Activated T-helper 1 cell treated with anti-CD3 and anti-CD28 coated beads, Interleukin-12 subunit alpha, Interleukin-12 subunit beta, Interleukin-2, Interleukin-4 antibody, amounts not matched to agents 30 ng/mL and 10 ng/mL and 1 ng/mL, durations not matched to agents 14 hours and 24 hours and 36 hours (primary cell): ENCODE measurements at regions of chr5 and their contacts with region 1.

Region 1: DNA sequence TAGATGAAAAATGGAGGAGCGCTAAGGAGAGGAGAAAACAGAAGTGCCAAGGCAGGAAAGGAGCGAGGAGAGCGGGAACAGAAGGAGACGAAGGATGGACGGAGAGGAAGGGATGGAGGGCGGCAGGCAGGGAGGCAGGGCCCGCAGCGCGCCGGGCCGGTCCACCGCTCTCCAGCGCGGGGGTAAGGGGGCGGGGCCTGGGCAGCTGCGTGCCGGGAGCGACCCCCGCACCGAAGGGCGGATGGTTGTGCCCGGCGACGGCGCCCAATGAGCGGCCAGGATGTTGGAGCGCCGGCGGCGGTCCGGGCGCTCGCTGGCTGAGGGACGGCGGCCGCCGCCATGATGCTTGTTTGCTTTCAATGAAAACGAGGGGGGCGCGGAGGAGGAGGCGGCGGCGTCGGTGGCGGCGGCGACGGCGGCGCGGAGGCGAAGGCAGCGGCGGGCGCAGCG is at the start of gene CNOT6:
- DNase-seq: peak; percentile 94
- H3K4me3 Mint-ChIP-seq: peak within 1 kb of the TSS; percentile 90
- H3K27ac Mint-ChIP-seq: peak within 1 kb of the TSS; percentile 93
- H3K4me1 Mint-ChIP-seq: peaks cover 37% of the 10 kb centered on the region
- H3K27me3 Mint-ChIP-seq: no peaks in the 10 kb centered on the region
- total RNA-seq, gene CNOT6: 48.8 and 49.7 TPM in 2 replicates

Region 2: GRCh38 chr5:179697993-179698934 is 795.8 kb before region 1 on chr5:
- intact Hi-C with region 1: loop called (anchors 10 kb)
- DNase-seq: peak; percentile 99
- H3K4me3 Mint-ChIP-seq: peak overlapping the region; percentile 100
- H3K27ac Mint-ChIP-seq: peak overlapping the region; percentile 100
- H3K4me1 Mint-ChIP-seq: peaks cover 27% of the 10 kb centered on the region
- H3K27me3 Mint-ChIP-seq: no peaks in the 10 kb centered on the region

Region 3: DNA sequence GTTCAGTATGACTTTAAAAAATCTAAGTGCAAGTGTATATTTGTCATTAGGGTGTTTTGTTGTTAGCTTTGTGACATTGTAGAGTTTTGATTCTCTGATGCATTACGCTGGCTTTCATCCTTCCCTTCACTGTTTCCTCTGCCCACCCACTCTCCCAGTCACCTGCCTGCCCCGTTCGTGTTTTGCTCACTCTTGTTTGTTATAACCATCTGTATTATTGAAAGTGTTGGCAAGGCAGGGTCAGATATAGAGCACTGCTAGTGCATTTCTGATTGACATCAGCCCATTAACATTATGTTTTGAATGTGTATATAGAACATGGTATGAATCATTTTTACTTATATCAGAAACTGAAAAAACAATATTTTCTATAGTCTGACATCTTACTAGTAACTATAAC is 69.9 kb after region 1 on chr5:
- intact Hi-C with region 1: loop called (anchors 10 kb)
- DNase-seq: no peak
- H3K4me3 Mint-ChIP-seq: no peak overlapping the region
- H3K27ac Mint-ChIP-seq: no peak overlapping the region
- H3K4me1 Mint-ChIP-seq: peaks cover 22% of the 10 kb centered on the region
- H3K27me3 Mint-ChIP-seq: no peaks in the 10 kb centered on the region

Region 4: DNA sequence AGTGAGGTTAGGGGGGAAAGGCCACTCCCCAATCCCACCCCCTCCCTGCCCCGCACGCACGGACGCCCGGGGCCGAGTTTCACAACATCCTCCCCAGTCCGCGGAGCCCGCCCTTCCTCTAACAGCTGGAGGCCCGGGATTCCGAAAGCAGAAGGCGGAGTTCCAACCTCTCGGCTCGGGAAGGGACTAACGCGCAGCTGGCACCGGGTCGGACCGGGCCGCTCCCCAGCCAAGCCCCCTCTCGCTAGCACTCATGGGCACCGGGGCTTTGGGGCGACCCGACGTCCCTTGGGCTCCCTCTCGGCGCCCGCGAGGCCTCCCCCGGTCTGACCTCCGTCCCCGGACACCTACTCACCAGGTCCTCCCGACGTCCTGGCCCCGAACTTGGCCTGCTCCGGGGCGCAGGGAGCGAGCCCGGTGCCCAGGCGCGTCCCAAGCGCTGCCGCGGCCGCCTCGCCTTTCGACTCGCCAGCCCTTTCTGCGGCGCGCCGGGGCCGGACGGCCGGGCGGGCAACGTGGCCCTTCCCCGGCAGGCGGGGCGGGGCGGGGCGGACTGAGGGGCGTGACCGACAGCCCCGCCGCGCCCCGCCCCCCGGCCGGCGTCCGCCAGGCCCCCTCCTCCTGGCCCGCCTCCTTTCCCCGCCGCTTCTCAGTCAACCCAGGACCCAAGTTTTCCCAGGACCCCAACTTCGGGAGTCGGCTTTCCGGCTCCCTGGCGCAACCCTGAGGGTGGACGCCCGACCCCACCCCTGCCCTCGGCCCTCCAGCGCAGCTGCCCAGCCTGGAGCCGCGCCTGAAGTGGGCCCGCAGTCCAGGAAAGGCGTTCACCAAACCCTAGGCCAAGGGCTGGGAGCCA is 308.5 kb after region 1 on chr5 and contains the start of gene MGAT1:
- intact Hi-C with region 1: loop called (anchors 2 kb)
- DNase-seq: peak; percentile 72
- H3K4me3 Mint-ChIP-seq: peak within 1 kb of the TSS; percentile 94
- H3K27ac Mint-ChIP-seq: peak within 1 kb of the TSS; percentile 96
- H3K4me1 Mint-ChIP-seq: peaks cover 82% of the 10 kb centered on the region
- H3K27me3 Mint-ChIP-seq: no peaks in the 10 kb centered on the region
- total RNA-seq, gene MGAT1: 106 and 107 TPM in 2 replicates

Region 5: DNA sequence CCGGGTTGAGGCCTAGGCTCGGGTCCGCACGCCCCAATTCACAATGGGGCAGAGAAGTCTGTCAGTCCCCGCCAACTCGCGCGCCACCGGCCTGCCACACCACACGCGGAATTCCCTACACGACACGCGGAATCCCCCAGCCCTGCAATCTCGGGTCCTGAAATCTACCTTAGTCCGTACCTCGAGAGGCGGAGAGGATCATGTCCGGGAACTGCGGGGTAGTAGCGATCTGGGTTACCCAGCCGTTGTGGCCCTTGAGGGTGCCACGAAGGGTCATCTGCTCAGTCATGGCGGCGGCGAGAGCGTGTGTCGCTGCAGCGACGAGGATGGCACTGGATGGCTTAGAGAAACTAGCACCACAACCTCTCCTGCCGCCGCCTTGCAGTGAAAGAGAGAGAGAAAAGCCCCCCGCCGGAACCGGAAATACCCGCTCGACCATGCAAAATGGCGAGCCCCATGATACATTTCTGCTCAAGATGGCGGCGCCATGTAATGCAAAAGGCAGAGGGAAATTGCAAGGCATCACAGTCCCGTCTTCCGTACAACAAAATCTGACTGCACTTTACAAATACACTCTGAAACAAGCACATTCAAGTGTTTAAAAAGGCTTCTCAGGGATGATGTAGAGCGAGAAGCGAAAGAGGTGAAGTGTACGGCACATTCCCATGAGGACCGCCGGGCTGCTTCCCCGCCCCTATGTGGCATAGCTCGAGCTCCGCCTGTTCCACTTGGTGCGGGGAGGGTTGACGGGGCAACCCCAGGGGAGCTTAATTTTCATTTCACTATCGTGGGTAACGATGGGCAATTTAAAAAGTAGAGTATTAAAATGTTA is 749.6 kb after region 1 on chr5 and contains the start of gene RACK1:
- intact Hi-C with region 1: loop called (anchors 10 kb)
- DNase-seq: peak; percentile 82
- H3K4me3 Mint-ChIP-seq: peak within 1 kb of the TSS; percentile 96
- H3K27ac Mint-ChIP-seq: peak within 1 kb of the TSS; percentile 99
- H3K4me1 Mint-ChIP-seq: peaks cover 49% of the 10 kb centered on the region
- H3K27me3 Mint-ChIP-seq: no peaks in the 10 kb centered on the region
- total RNA-seq, gene RACK1: 2,098 and 2,121 TPM in 2 replicates